Ascending aorta (tissue), 2 donors: ENCODE measurements at regions of chr5 and their contacts with region 1.

Region 1: DNA sequence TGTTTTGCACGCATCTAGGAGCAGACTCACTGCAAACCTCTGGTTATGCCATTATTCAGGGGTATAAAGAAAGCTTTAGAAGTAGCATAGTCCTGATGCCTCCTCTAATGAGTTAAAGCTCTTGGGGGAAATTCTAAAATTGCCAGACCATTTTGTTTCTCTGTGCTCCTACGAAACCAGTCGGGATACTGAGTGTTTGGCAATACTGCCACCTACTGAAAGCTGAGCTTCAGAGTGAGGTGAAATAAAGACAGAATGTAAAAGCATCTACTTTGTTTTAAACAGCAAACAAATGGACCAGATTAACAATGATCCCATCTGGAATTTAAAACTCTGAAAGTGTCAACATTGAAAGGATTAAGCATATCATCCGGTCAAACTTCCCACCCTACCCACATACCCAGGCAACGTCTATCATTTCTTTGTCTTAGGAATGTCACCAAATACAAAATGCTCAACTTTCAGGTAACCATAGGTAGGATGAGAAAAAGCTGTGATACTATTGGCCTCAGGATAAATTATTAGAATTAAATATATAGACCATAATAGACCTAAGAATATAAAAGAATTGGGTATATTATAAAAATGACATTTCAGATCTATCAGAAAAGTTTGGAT is 77.8 kb upstream of the SHISAL2B start:
- DNase-seq: peak in 1 of 2 donors; percentile 69
- H3K4me3 ChIP-seq: no peak overlapping the region
- H3K27ac ChIP-seq: no peak overlapping the region
- H3K4me1 ChIP-seq: no peaks in the 10 kb centered on the region
- H3K27me3 ChIP-seq: no peaks in the 10 kb centered on the region
- CTCF ChIP-seq: peak; percentile 70 to 80 (median 71)

Region 2: GRCh38 chr5:64229163-64229774 is 383.2 kb before region 1 on chr5:
- intact Hi-C with region 1: loop called (anchors 1 kb)
- DNase-seq: no peak
- H3K4me3 ChIP-seq: no peak overlapping the region
- H3K27ac ChIP-seq: no peak overlapping the region
- H3K4me1 ChIP-seq: no peaks in the 10 kb centered on the region
- H3K27me3 ChIP-seq: no peaks in the 10 kb centered on the region
- CTCF ChIP-seq: peak; percentile 38 to 75 (median 42)

Region 3: DNA sequence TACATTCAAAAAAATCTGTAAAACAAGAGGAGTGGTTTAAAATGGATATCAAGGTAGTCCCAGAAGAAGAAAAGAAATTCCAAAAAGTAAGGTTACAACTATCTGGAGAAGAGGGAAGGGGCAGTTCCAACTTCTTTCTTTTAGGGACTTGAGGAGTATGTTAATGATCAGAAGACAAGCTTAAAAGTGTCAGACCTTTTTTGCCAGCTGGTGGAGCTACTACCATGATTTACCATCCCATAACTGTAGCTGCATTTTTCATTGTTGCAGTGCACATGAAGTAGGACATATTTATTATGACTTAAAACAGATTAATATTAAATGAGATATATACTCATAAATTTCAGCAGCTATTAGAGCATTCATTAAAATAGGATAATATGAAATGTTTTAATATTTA is 265.1 kb before region 1 on chr5:
- intact Hi-C with region 1: loop called (anchors 5 kb)
- DNase-seq: no peak
- H3K4me3 ChIP-seq: no peak overlapping the region
- H3K27ac ChIP-seq: no peak overlapping the region
- H3K4me1 ChIP-seq: peaks cover 0 to 11% of the 10 kb centered on the region in 2 donors
- H3K27me3 ChIP-seq: no peaks in the 10 kb centered on the region
- CTCF ChIP-seq: peak in 1 of 3 experiments; percentile 33